WTC11 (cell line): ENCODE measurements at regions of chr2 and their contacts with region 1.

Region 1: GRCh38 chr2:10408649-10409579 is 39.2 kb downstream of the ODC1 start:
- DNase-seq: peak; percentile 90
- ATAC-seq: peak; percentile 94
- H3K4me3 Mint-ChIP-seq: no peak overlapping the region
- H3K27ac Mint-ChIP-seq: no peak overlapping the region
- H3K4me1 Mint-ChIP-seq: peaks cover 9% of the 10 kb centered on the region
- H3K27me3 Mint-ChIP-seq: no peaks in the 10 kb centered on the region
- CTCF ChIP-seq: peak; percentile 93

Region 2: DNA sequence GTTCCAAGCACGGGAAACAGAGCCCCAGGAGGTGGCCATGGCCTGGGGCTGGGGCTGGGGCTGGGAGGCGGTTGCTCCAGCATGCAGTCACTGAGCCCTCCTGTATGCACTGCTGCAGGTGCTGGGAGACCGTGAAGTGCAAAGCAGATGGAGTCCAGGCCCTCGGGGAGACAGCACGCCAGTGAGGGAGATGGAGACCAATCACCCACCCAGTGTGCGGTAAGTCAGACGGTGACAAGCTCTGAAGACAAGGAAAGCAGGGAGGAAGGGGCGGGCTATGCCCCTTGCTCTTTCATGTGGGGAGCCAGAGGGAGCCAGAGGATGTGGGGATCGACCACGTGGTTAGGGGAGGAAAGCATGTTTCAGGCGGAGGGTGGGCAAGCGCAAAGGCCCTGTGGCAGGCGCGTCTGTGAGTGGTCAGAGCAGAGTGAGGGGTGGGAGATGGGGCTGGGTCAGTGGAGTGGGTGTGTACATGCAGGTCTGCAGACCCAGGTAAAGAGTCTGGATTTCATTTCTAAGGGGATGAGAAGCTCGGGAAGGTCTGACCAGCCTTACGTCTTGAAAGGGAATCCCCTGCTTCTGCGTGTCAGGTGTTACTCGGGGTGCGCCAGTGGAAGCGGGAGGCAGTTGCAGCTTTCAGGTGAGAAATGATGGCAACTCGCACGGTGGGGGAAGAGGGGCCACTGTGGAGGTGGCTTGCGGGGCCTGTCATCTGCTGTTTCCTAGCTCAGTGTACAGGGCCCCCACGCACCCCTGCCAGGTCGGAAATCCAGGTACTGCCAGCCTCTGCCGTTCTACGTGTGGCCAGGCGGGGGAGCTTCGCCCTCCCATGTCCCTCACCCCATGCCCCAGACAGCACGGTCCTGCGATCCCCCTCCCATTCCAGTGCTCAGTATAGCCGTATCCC is 266.9 kb before region 1 on chr2:
- CTCF ChIA-PET with region 1: interaction called, 27 read pairs
- POLR2A ChIA-PET with region 1: no interaction called
- DNase-seq: peak; percentile 68
- ATAC-seq: peak; percentile 89
- H3K4me3 Mint-ChIP-seq: no peak overlapping the region
- H3K27ac Mint-ChIP-seq: no peak overlapping the region; the same call in 1 of the 2 replicates
- H3K4me1 Mint-ChIP-seq: peaks cover 5% of the 10 kb centered on the region; the same call in 1 of the 2 replicates
- H3K27me3 Mint-ChIP-seq: no peaks in the 10 kb centered on the region
- CTCF ChIP-seq: peak; percentile 60

Region 3: GRCh38 chr2:10285556-10286198 is 123.2 kb before region 1 on chr2:
- CTCF ChIA-PET with region 1: interaction called, 35 read pairs
- POLR2A ChIA-PET with region 1: no interaction called
- DNase-seq: no peak
- ATAC-seq: peak; percentile 59
- H3K4me3 Mint-ChIP-seq: no peak overlapping the region
- H3K27ac Mint-ChIP-seq: no peak overlapping the region
- H3K4me1 Mint-ChIP-seq: peaks cover 8% of the 10 kb centered on the region
- H3K27me3 Mint-ChIP-seq: peaks cover 3% of the 10 kb centered on the region; the same call in 1 of the 2 replicates
- CTCF ChIP-seq: no peak

Region 4: GRCh38 chr2:10362096-10362897 is 46.6 kb before region 1 on chr2:
- CTCF ChIA-PET with region 1: interaction called, 10 read pairs
- POLR2A ChIA-PET with region 1: no interaction called
- DNase-seq: no peak
- ATAC-seq: no peak; the same call in 1 of the 2 replicates
- H3K4me3 Mint-ChIP-seq: no peak overlapping the region
- H3K27ac Mint-ChIP-seq: no peak overlapping the region
- H3K4me1 Mint-ChIP-seq: peaks cover 6% of the 10 kb centered on the region
- H3K27me3 Mint-ChIP-seq: no peaks in the 10 kb centered on the region
- CTCF ChIP-seq: no peak

Region 5: DNA sequence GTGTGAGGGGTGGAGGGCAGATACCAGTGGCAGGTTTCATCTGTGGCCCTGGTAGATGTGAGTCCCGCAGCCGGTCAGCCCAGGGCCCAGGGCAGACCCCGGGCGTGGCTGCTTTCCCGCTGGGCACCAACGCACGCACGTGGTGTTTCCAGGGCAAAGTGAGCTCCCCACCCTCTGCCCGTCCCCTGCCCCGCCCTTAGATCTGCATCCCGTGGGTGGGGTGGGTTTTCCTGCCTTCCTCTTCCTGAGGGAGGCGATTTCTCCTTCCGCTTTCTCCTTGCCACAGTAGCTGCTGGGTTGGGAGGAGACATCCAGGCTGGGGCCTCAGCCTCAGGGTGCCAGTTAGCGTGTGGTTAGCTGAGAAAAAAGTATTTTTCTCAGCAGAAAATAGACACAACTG is 10.4 kb before region 1 on chr2:
- CTCF ChIA-PET with region 1: interaction called, 34 read pairs
- POLR2A ChIA-PET with region 1: no interaction called
- DNase-seq: no peak
- ATAC-seq: no peak
- H3K4me3 Mint-ChIP-seq: no peak overlapping the region
- H3K27ac Mint-ChIP-seq: no peak overlapping the region
- H3K4me1 Mint-ChIP-seq: peaks cover 18% of the 10 kb centered on the region
- H3K27me3 Mint-ChIP-seq: no peaks in the 10 kb centered on the region
- CTCF ChIP-seq: no peak